Caco-2 (cell line): ENCODE measurements at regions of chr2 and their contacts with region 1.

Region 1: GRCh38 chr2:32422133-32422532 is 65.3 kb downstream of the BIRC6 start:
- DNase-seq: no peak
- H3K4me3 ChIP-seq: no peak overlapping the region
- H3K4me3 Mint-ChIP-seq: no peak overlapping the region
- H3K27ac Mint-ChIP-seq: no peak overlapping the region
- H3K4me1 ChIP-seq: no peaks in the 10 kb centered on the region
- H3K4me1 Mint-ChIP-seq: peaks cover 24% of the 10 kb centered on the region
- H3K27me3 ChIP-seq: no peaks in the 10 kb centered on the region
- H3K27me3 Mint-ChIP-seq: no peaks in the 10 kb centered on the region
- CTCF ChIP-seq: no peak

Region 2: DNA sequence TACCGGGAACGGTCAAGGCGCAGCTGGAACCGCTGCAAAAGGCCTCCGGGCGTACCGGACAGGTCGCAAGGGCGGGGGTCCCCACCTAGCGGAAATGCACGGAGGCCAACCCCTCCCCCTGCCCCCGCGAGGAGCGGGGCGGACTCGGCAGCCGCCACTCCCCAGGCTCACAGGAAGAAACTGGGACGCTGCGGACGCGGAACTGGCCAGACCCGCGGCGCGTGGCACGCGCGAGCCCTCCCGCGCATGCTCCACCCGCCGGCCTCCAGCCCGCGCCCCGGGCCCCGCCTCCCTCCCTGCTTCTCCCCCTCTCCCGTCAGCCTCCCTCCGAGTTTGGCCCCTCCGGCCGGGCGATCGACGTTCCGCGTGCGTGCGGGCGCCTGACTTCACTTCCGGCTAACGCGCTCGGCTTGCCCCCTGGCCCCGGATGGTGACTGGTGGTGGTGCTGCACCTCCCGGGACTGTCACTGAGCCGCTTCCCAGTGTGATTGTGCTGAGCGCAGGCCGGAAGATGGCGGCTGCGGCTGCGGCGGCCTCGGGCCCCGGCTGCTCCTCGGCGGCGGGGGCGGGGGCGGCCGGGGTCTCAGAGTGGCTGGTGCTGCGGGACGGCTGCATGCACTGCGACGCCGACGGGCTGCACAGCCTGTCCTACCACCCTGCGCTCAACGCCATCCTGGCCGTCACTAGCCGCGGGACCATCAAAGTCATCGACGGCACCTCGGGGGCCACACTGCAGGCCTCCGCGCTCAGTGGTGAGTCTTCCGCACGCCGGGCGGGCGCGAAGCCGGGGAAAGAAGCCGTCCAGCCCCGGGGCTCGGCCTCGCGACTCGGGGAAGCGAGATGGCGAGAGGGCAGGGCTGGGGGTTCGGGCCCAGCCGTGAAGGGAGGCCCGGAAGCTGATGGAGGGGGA is 65.1 kb before region 1 on chr2 and contains the start of gene BIRC6:
- CTCF ChIA-PET with region 1: no interaction called
- POLR2A ChIA-PET with region 1: no interaction called
- intact Hi-C with region 1: loop called (anchors 5 kb)
- DNase-seq: peak; percentile 99 to 100
- H3K4me3 ChIP-seq: peak within 1 kb of the TSS; percentile 100
- H3K4me3 Mint-ChIP-seq: peak within 1 kb of the TSS; percentile 82
- H3K27ac Mint-ChIP-seq: peak within 1 kb of the TSS; percentile 78
- H3K4me1 ChIP-seq: peaks cover 16% of the 10 kb centered on the region
- H3K4me1 Mint-ChIP-seq: peaks cover 30% of the 10 kb centered on the region
- H3K27me3 ChIP-seq: no peaks in the 10 kb centered on the region
- H3K27me3 Mint-ChIP-seq: no peaks in the 10 kb centered on the region
- CTCF ChIP-seq: no peak
- total RNA-seq, gene BIRC6: 96.7 and 100 TPM in 2 replicates

Region 3: DNA sequence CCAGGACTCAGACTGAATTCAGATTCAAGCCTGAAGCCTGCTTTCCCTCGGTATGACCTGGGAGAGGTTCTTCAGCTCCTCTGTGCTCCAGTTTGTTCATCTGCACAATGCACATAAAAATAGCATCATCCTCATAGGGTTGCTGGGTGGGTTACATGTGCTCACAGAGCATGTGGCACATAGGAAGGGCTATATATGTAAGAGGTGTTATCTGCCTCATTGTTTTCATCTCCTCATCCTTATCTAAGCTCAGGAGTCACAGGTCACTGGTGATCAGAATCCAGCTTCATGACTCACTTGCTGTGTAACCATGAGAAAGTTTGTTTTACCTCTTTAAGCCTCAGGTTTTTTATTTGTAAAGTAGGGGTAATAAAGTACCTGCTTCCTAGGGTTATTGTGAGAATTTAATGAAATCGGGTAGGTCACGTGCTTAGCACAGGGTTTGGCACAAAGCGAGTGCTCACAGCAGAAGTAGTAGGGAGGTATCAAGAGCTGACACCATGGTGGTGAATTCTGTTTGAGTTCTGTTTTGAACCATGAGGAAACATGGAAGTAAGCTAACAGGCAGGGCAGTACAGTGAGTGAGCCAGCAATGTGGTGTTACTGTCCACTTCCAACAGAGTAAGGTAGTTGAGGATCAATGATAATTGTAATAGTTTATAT is 383.1 kb after region 1 on chr2:
- CTCF ChIA-PET with region 1: no interaction called
- POLR2A ChIA-PET with region 1: no interaction called
- intact Hi-C with region 1: no loop called
- DNase-seq: peak; percentile 75 to 81
- H3K4me3 ChIP-seq: no peak overlapping the region
- H3K4me3 Mint-ChIP-seq: peak overlapping the region; percentile 2
- H3K27ac Mint-ChIP-seq: peak overlapping the region; percentile 65
- H3K4me1 ChIP-seq: peaks cover 34% of the 10 kb centered on the region
- H3K4me1 Mint-ChIP-seq: peaks cover 37% of the 10 kb centered on the region
- H3K27me3 ChIP-seq: no peaks in the 10 kb centered on the region
- H3K27me3 Mint-ChIP-seq: no peaks in the 10 kb centered on the region
- CTCF ChIP-seq: no peak